ENCODE measurements at regions of chr20 and their contacts with region 1.

Region 1: GRCh38 chr20:17682103-17682888 is at the start of gene RRBP1:
- DNase-seq: peak; percentile 97 to 98 (median 98)
- H3K4me3 ChIP-seq: peak within 1 kb of the TSS; percentile 79 to 81
- H3K4me3 Mint-ChIP-seq: peak within 1 kb of the TSS; percentile 81 to 94 (median 90)
- H3K27ac ChIP-seq: peak within 1 kb of the TSS; percentile 63
- H3K27ac Mint-ChIP-seq: peak within 1 kb of the TSS; percentile 71 to 96 (median 87)
- H3K4me1 ChIP-seq: peaks cover 22% of the 10 kb centered on the region
- H3K4me1 Mint-ChIP-seq: peaks cover 10 to 28% (median 20%) of the 10 kb centered on the region in 4 donors
- H3K27me3 ChIP-seq: peaks cover 3% of the 10 kb centered on the region
- H3K27me3 Mint-ChIP-seq: peaks cover 19 to 24% of the 10 kb centered on the region in 2 donors
- total RNA-seq, gene RRBP1: 28.0 to 33.7 TPM

Region 2: GRCh38 chr20:17569616-17570346 is 112.5 kb before region 1 on chr20 and contains the start of gene DSTN:
- CTCF ChIA-PET with region 1: interaction called, 18 read pairs
- POLR2A ChIA-PET with region 1: interaction called, 25 read pairs
- intact Hi-C with region 1: loop called (anchors 1 kb)
- DNase-seq: peak; percentile 87 to 91 (median 90)
- H3K4me3 ChIP-seq: peak within 1 kb of the TSS; percentile 73 to 84
- H3K4me3 Mint-ChIP-seq: peak within 1 kb of the TSS; percentile 94 to 97 (median 96)
- H3K27ac ChIP-seq: peak within 1 kb of the TSS; percentile 83
- H3K27ac Mint-ChIP-seq: peak within 1 kb of the TSS; percentile 70 to 97 (median 96)
- H3K4me1 ChIP-seq: peaks cover 35% of the 10 kb centered on the region
- H3K4me1 Mint-ChIP-seq: peaks cover 23 to 37% (median 28%) of the 10 kb centered on the region in 4 donors
- H3K27me3 ChIP-seq: no peaks in the 10 kb centered on the region
- H3K27me3 Mint-ChIP-seq: no peaks in the 10 kb centered on the region
- total RNA-seq, gene DSTN: 43.1 to 49.1 TPM

Region 3: GRCh38 chr20:17898548-17898994 is 216.3 kb after region 1 on chr20:
- CTCF ChIA-PET with region 1: interaction called, 22 read pairs
- POLR2A ChIA-PET with region 1: no interaction called
- intact Hi-C with region 1: loop called (anchors 1 kb)
- DNase-seq: peak; percentile 56 to 63 (median 60)
- H3K4me3 ChIP-seq: no peak overlapping the region
- H3K4me3 Mint-ChIP-seq: no peak overlapping the region
- H3K27ac ChIP-seq: no peak overlapping the region
- H3K27ac Mint-ChIP-seq: no peak overlapping the region
- H3K4me1 ChIP-seq: no peaks in the 10 kb centered on the region
- H3K4me1 Mint-ChIP-seq: peaks cover 4 to 8% (median 6%) of the 10 kb centered on the region in 4 donors
- H3K27me3 ChIP-seq: no peaks in the 10 kb centered on the region
- H3K27me3 Mint-ChIP-seq: peaks cover 13 to 20% of the 10 kb centered on the region in 2 donors

Region 4: DNA sequence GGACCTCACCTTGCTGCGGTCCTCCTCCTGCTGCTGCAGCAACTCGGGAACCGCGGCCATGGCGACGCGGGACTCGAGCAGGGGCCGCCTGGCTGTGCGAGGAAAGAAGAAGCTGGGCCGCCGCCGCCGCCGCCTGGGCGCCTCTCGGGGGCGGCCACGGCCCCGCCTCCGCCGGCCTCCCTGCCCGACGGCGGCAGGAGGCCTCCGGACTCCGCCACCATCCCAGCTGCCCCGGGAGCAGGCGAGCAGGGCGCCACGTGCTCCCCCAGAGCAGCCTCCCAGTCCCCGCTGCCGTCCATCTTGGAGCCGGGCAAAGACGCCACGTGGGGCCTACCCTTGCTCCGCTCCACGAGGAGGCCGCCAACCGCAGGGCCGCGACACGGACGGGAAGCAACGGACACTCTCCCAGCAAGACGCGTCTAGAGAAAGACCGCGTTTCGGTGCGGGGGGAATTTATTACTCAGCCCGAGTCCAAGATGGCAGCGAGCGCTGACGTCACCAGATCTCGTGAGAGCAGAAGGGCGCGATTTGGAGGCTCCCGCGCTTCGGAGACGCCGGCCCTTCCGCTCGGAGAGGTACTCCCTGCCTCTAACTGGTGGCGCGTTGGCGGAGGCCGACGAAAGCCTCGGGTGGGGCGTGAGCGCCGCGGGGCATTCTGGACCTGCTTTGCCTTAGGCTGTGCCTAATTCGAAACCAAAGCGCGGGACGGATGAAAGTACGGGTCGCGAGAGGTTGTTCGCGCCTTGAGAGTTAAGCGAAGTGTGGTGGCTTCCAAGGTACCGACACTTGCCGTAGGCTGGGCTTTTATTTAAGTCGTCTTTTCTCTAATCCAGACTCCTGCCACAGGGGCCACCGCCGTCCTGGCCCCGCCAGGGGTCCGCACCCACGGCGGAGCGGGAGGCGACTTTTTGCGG is 286.3 kb after region 1 on chr20 and contains the starts of genes MGME1 and SNX5:
- CTCF ChIA-PET with region 1: interaction called, 28 read pairs
- POLR2A ChIA-PET with region 1: interaction called, 77 read pairs
- intact Hi-C with region 1: loop called (anchors 1 kb)
- DNase-seq: peak; percentile 99 to 100 (median 99)
- H3K4me3 ChIP-seq: peak within 1 kb of the TSS; percentile 90 to 95
- H3K4me3 Mint-ChIP-seq: peak within 1 kb of the TSS; percentile 86 to 97 (median 94)
- H3K27ac ChIP-seq: peak within 1 kb of the TSS; percentile 82
- H3K27ac Mint-ChIP-seq: peak within 1 kb of the TSS; percentile 97 to 99 (median 98)
- H3K4me1 ChIP-seq: peaks cover 66% of the 10 kb centered on the region
- H3K4me1 Mint-ChIP-seq: peaks cover 51 to 92% (median 63%) of the 10 kb centered on the region in 4 donors
- H3K27me3 ChIP-seq: no peaks in the 10 kb centered on the region
- H3K27me3 Mint-ChIP-seq: peaks cover 0 to 1% of the 10 kb centered on the region in 2 donors
- total RNA-seq, gene MGME1: 15.4 to 16.5 TPM
- total RNA-seq, gene SNX5: 81.5 to 81.6 TPM

Region 5: GRCh38 chr20:18137412-18138265 is 455.3 kb after region 1 on chr20 and contains the starts of genes KAT14 and PET117:
- CTCF ChIA-PET with region 1: interaction called, 3 read pairs
- POLR2A ChIA-PET with region 1: interaction called, 16 read pairs
- intact Hi-C with region 1: loop called (anchors 2 kb)
- DNase-seq: peak; percentile 89 to 95 (median 92)
- H3K4me3 ChIP-seq: peak within 1 kb of the TSS; percentile 71 to 87
- H3K4me3 Mint-ChIP-seq: peak within 1 kb of the TSS; percentile 88 to 94 (median 90)
- H3K27ac ChIP-seq: peak within 1 kb of the TSS; percentile 78
- H3K27ac Mint-ChIP-seq: peak within 1 kb of the TSS; percentile 89 to 96 (median 92)
- H3K4me1 ChIP-seq: peaks cover 34% of the 10 kb centered on the region
- H3K4me1 Mint-ChIP-seq: peaks cover 22 to 43% (median 30%) of the 10 kb centered on the region in 4 donors
- H3K27me3 ChIP-seq: no peaks in the 10 kb centered on the region
- H3K27me3 Mint-ChIP-seq: no peaks in the 10 kb centered on the region
- total RNA-seq, gene KAT14: 22.4 to 24.0 TPM
- total RNA-seq, gene PET117: 14.1 to 15.0 TPM